Mammary epithelial cell (primary cell): ENCODE measurements at regions of chr11 and their contacts with region 1.

Region 1: GRCh38 chr11:129861702-129862113 is 33.7 kb downstream of the NFRKB start:
- DNase-seq: peak; percentile 95
- H3K4me3 ChIP-seq: no peak overlapping the region
- H3K27ac ChIP-seq: peak overlapping the region; percentile 73
- H3K4me1 ChIP-seq: peaks cover 17% of the 10 kb centered on the region
- H3K27me3 ChIP-seq: no peaks in the 10 kb centered on the region
- CTCF ChIP-seq: no peak

Region 2: DNA sequence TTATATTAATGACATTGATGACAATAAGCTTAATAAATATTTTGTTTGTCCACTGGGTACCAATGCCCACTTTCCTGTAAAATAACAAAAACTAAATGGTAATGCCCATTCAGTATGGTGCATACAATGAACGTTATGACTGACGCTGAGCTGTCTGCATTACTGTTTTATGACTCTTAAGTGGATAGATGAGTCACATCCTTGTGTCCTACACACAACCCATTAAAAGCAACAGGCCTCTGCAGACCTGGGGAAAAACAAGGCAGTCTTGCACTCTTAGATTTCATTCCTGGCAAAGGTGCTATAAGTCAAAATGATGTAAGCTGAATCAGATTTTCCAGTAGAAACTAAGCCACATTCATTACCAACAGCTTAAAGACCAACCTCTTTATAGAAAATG is 222.4 kb before region 1 on chr11:
- CTCF ChIA-PET with region 1: no interaction called
- dilution Hi-C with region 1: no loop called
- in situ Hi-C with region 1: no loop called
- intact Hi-C with region 1: no loop called
- DNase-seq: peak; percentile 99
- H3K4me3 ChIP-seq: no peak overlapping the region
- H3K27ac ChIP-seq: peak overlapping the region; percentile 95
- H3K4me1 ChIP-seq: peaks cover 76% of the 10 kb centered on the region
- H3K27me3 ChIP-seq: no peaks in the 10 kb centered on the region
- CTCF ChIP-seq: no peak

Region 3: DNA sequence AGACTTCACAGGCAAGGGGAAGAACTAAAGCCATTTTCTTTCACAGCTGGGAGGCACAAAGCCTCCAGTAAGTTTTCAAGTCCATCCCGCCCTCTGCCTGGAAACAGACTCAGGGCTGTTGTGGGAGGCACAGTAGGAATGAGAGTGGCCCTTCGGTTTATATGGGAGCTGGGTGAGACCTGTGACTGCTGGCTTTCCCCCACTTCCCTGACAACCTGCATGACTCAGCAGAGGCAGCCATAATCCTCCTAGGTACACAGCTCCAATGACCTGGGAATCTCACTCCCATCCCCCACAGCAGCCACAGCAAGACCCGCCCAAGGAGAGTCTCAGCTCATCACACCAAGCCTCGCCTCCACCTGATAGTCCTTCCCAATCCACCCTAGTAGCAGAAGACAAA is 58.2 kb before region 1 on chr11:
- CTCF ChIA-PET with region 1: no interaction called
- dilution Hi-C with region 1: no loop called
- in situ Hi-C with region 1: no loop called
- intact Hi-C with region 1: no loop called
- DNase-seq: no peak
- H3K4me3 ChIP-seq: no peak overlapping the region
- H3K27ac ChIP-seq: no peak overlapping the region
- H3K4me1 ChIP-seq: peaks cover 3% of the 10 kb centered on the region
- H3K27me3 ChIP-seq: no peaks in the 10 kb centered on the region
- CTCF ChIP-seq: no peak

Region 4: GRCh38 chr11:129828301-129828836 is 33.3 kb before region 1 on chr11:
- CTCF ChIA-PET with region 1: no interaction called
- dilution Hi-C with region 1: loop called (anchors 5 kb)
- in situ Hi-C with region 1: no loop called
- intact Hi-C with region 1: loop called (anchors 2 kb)
- DNase-seq: peak; percentile 81
- H3K4me3 ChIP-seq: peak overlapping the region in 1 of 3 experiments; percentile 13
- H3K27ac ChIP-seq: peak overlapping the region; percentile 95
- H3K4me1 ChIP-seq: peaks cover 48% of the 10 kb centered on the region
- H3K27me3 ChIP-seq: no peaks in the 10 kb centered on the region
- CTCF ChIP-seq: no peak

Region 5: GRCh38 chr11:129846501-129847335 is 15.0 kb before region 1 on chr11:
- CTCF ChIA-PET with region 1: no interaction called
- dilution Hi-C with region 1: no loop called
- in situ Hi-C with region 1: no loop called
- intact Hi-C with region 1: loop called (anchors 1 kb)
- DNase-seq: peak; percentile 95
- H3K4me3 ChIP-seq: no peak overlapping the region
- H3K27ac ChIP-seq: peak overlapping the region; percentile 47
- H3K4me1 ChIP-seq: peaks cover 14% of the 10 kb centered on the region
- H3K27me3 ChIP-seq: no peaks in the 10 kb centered on the region
- CTCF ChIP-seq: no peak

Region 6: GRCh38 chr11:129895126-129896041 is 33.7 kb after region 1 on chr11 and contains the start of gene NFRKB:
- CTCF ChIA-PET with region 1: no interaction called
- dilution Hi-C with region 1: no loop called
- in situ Hi-C with region 1: no loop called
- intact Hi-C with region 1: loop called (anchors 2 kb)
- DNase-seq: peak; percentile 76
- H3K4me3 ChIP-seq: peak within 1 kb of the TSS; percentile 70 to 95 (median 90)
- H3K27ac ChIP-seq: peak within 1 kb of the TSS; percentile 45
- H3K4me1 ChIP-seq: peaks cover 15% of the 10 kb centered on the region
- H3K27me3 ChIP-seq: no peaks in the 10 kb centered on the region
- CTCF ChIP-seq: no peak
- total RNA-seq, gene NFRKB: 27.3 to 33.6 TPM